ENCODE measurements at regions of chr4 and their contacts with region 1.

Region 1: GRCh38 chr4:26719954-26720552 is 136.2 kb downstream of the TBC1D19 start:
- DNase-seq: no peak
- ATAC-seq: no peak

Region 2: GRCh38 chr4:26459054-26459755 is 260.8 kb before region 1 on chr4:
- intact Hi-C with region 1: loop called (anchors 10 kb)
- DNase-seq: no peak
- ATAC-seq: no peak

Region 3: GRCh38 chr4:26780539-26780938 is 60.5 kb after region 1 on chr4:
- intact Hi-C with region 1: loop called (anchors 1 kb)
- DNase-seq: no peak
- ATAC-seq: no peak